B cell (primary cell): ENCODE measurements at regions of chr12 and their contacts with region 1.

Region 1: DNA sequence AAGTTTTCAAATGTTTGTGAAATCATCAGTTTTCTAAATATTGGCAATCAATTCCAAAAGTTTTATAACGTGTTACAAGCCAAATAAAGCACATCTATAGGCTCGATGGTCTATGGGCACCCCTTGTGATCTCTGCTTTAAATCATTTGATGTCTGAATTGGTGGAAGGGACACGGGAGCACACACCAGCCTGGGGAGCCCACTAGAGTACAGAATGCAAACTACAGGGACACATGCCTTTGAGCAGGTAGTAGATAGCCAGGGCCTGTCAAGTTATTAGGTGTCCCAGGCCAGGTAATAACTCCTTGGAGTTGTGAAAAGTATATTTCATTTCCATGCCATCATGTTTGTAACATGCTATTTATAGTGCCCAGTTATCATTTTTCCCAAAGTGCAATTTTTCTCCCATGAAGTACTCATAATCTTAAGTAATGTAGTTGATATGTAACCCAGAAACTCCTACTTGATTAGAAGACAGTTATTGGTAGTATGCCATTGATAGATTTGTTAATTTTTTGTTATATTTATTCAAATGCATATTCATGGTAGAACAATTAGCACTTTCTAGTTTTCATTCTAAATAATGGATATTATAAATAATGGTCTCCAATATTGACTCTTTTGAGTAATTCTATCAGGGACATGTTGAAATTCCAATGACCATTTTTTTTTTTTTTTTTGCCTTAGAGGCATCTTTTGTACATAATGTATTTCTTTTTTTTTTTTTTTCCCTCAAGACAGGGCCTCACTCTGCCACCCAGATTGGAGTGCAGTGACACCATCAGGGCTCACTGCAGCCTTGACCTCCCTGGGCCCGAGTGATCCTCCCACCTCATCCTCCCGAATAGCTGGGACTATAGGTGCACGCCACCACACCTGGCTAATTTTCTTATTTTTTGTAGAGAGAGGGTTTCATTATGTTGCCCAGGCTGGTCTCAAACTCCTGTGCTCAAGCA is 96.9 kb upstream of the FGD4 start:
- DNase-seq: peak; percentile 38
- ATAC-seq: peak; percentile 96
- H3K4me3 ChIP-seq: no peak overlapping the region
- H3K4me3 Mint-ChIP-seq: peak overlapping the region; percentile 57
- H3K27ac ChIP-seq: peak overlapping the region; percentile 20 to 75
- H3K27ac Mint-ChIP-seq: peak overlapping the region; percentile 70
- H3K4me1 ChIP-seq: peaks cover 23 to 26% of the 10 kb centered on the region in 2 donors
- H3K4me1 Mint-ChIP-seq: peaks cover 30% of the 10 kb centered on the region
- H3K27me3 ChIP-seq: no peaks in the 10 kb centered on the region
- H3K27me3 Mint-ChIP-seq: no peaks in the 10 kb centered on the region
- CTCF ChIP-seq: peak; percentile 78

Region 2: DNA sequence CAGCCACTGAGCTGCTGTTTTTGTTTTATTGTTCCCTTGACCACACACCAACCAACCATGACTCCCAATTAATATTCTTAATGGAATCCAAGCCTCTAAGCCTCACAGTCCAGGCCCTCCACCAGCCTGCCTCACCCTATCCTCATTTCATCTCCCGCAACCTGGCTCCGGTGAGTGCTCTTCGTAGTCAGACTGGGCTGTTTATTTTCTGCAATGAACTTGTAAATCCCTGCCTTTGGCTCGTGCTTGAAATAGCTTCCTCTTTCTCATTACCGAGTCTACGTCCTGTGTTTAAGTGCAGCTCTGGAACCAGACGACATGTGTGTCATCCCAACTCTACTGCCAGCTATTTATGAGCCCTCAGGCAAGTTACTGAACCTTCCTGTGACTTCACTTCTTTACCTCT is 655.4 kb before region 1 on chr12:
- CTCF ChIA-PET with region 1: no interaction called
- POLR2A ChIA-PET with region 1: no interaction called
- intact Hi-C with region 1: loop called (anchors 2 kb)
- DNase-seq: peak; percentile 44
- ATAC-seq: peak; percentile 28
- H3K4me3 ChIP-seq: no peak overlapping the region
- H3K4me3 Mint-ChIP-seq: peak overlapping the region; percentile 24
- H3K27ac ChIP-seq: no peak overlapping the region
- H3K27ac Mint-ChIP-seq: peak overlapping the region; percentile 38
- H3K4me1 ChIP-seq: peaks cover 21 to 22% of the 10 kb centered on the region in 2 donors
- H3K4me1 Mint-ChIP-seq: peaks cover 29% of the 10 kb centered on the region
- H3K27me3 ChIP-seq: no peaks in the 10 kb centered on the region
- H3K27me3 Mint-ChIP-seq: no peaks in the 10 kb centered on the region
- CTCF ChIP-seq: no peak

Region 3: GRCh38 chr12:32062881-32063280 is 239.6 kb before region 1 on chr12:
- CTCF ChIA-PET with region 1: interaction called, 13 read pairs
- POLR2A ChIA-PET with region 1: interaction called, 7 read pairs
- intact Hi-C with region 1: loop called (anchors 1 kb)
- DNase-seq: peak; percentile 8
- ATAC-seq: no peak
- H3K4me3 ChIP-seq: no peak overlapping the region
- H3K4me3 Mint-ChIP-seq: no peak overlapping the region
- H3K27ac ChIP-seq: no peak overlapping the region
- H3K27ac Mint-ChIP-seq: no peak overlapping the region
- H3K4me1 ChIP-seq: peaks cover 10 to 12% of the 10 kb centered on the region in 2 donors
- H3K4me1 Mint-ChIP-seq: peaks cover 13% of the 10 kb centered on the region
- H3K27me3 ChIP-seq: no peaks in the 10 kb centered on the region
- H3K27me3 Mint-ChIP-seq: no peaks in the 10 kb centered on the region
- CTCF ChIP-seq: no peak

Region 4: GRCh38 chr12:32106517-32107358 is 195.8 kb before region 1 on chr12 and contains the start of gene BICD1:
- CTCF ChIA-PET with region 1: interaction called, 3 read pairs
- POLR2A ChIA-PET with region 1: no interaction called
- intact Hi-C with region 1: loop called (anchors 2 kb)
- DNase-seq: peak; percentile 80
- ATAC-seq: peak; percentile 82
- H3K4me3 ChIP-seq: peak within 1 kb of the TSS; percentile 43 to 95 (median 80)
- H3K4me3 Mint-ChIP-seq: peak within 1 kb of the TSS; percentile 93
- H3K27ac ChIP-seq: peak within 1 kb of the TSS; percentile 15 to 86
- H3K27ac Mint-ChIP-seq: peak within 1 kb of the TSS; percentile 97
- H3K4me1 ChIP-seq: peaks cover 19 to 20% of the 10 kb centered on the region in 2 donors
- H3K4me1 Mint-ChIP-seq: peaks cover 30% of the 10 kb centered on the region
- H3K27me3 ChIP-seq: no peaks in the 10 kb centered on the region
- H3K27me3 Mint-ChIP-seq: no peaks in the 10 kb centered on the region
- CTCF ChIP-seq: peak; percentile 23
- total RNA-seq, gene BICD1: 93.1 and 93.5 TPM in 2 replicates

Region 5: DNA sequence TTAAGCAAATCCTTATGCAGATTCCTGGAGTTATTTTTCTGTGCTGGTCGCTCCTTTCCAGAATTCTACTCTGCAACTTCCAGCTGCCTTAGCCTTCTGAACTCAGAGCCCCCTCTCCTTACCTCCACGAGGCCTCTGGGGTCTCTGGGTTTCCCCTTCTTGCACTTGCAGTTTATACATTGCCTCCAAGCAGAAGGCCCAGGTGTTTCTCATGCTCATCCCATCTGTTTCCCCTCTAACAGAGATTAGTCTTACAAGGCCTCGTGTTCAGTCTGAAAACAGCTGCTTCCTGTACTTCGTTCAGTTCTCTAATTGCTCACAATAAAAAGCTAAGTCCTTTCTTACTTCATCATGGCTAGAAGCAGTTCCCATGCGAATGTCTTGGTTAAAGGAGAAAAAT is 37.5 kb before region 1 on chr12:
- CTCF ChIA-PET with region 1: interaction called, 6 read pairs
- POLR2A ChIA-PET with region 1: interaction called, 5 read pairs
- intact Hi-C with region 1: loop called (anchors 5 kb)
- DNase-seq: peak; percentile 84
- ATAC-seq: peak; percentile 77
- H3K4me3 ChIP-seq: peak overlapping the region in 1 of 5 experiments; percentile 11
- H3K4me3 Mint-ChIP-seq: peak overlapping the region; percentile 33
- H3K27ac ChIP-seq: peak overlapping the region; percentile 95 to 98
- H3K27ac Mint-ChIP-seq: peak overlapping the region; percentile 82
- H3K4me1 ChIP-seq: peaks cover 39 to 40% of the 10 kb centered on the region in 2 donors
- H3K4me1 Mint-ChIP-seq: peaks cover 37% of the 10 kb centered on the region
- H3K27me3 ChIP-seq: no peaks in the 10 kb centered on the region
- H3K27me3 Mint-ChIP-seq: no peaks in the 10 kb centered on the region
- CTCF ChIP-seq: no peak

Region 6: DNA sequence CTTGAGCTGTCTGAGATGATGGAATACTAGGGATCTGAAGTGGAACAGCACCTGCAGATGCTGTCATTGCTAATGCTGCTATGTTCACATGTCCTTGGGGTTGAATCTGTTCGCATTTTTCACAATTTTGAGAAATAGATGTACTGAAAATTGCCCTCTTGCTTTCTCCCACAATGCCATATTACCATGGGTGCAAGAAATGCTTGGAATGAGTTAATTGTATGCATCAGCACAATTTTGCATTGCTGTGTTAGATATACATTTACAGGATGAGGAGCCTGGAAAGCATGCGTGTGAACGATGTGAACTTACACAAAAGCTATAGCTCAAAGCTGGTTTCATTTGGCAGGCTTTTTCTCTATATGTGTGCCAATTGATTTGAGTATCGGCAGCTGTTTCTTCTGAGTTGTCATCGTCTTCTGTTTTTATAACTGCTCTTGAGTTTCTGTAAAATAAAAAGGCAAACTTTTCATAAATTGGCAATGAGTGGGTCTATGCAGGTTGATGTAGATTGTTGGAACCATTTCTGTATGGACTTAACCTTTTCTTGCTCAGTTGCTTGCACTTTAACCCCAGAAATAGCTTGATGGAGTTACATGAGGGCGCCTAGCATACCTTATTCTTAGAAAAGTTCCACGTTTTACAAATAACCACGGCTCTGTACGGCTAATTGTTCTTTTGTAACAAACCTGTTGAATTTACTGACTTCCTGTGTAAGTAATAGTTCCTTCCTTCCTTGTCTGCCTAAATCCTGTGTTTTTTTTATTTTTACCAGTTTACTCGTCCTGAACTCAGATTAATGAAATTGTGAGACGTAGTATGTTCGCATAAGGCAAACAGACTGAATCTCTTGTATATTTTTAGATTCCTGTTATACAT is 202.8 kb after region 1 on chr12:
- CTCF ChIA-PET with region 1: no interaction called
- POLR2A ChIA-PET with region 1: no interaction called
- intact Hi-C with region 1: no loop called
- DNase-seq: no peak
- ATAC-seq: no peak
- H3K4me3 ChIP-seq: no peak overlapping the region
- H3K4me3 Mint-ChIP-seq: no peak overlapping the region
- H3K27ac ChIP-seq: no peak overlapping the region
- H3K27ac Mint-ChIP-seq: no peak overlapping the region
- H3K4me1 ChIP-seq: no peaks in the 10 kb centered on the region
- H3K4me1 Mint-ChIP-seq: peaks cover 2% of the 10 kb centered on the region
- H3K27me3 ChIP-seq: no peaks in the 10 kb centered on the region
- H3K27me3 Mint-ChIP-seq: no peaks in the 10 kb centered on the region
- CTCF ChIP-seq: no peak